Activated CD8-positive, alpha-beta memory T cell treated with anti-CD3 and anti-CD28 coated beads, Interleukin-2, amount 10 ng/mL, durations not matched to agents 7 days and 5 days (primary cell): ENCODE measurements at regions of chr10 and their contacts with region 1.

Region 1: GRCh38 chr10:73886085-73886529 is 11.8 kb upstream of the CAMK2G start:
- DNase-seq: peak; percentile 78
- ATAC-seq: peak; percentile 97
- H3K4me3 Mint-ChIP-seq: no peak overlapping the region
- H3K27ac Mint-ChIP-seq: no peak overlapping the region
- H3K4me1 Mint-ChIP-seq: peaks cover 12% of the 10 kb centered on the region
- H3K27me3 Mint-ChIP-seq: peaks cover 3% of the 10 kb centered on the region

Region 2: DNA sequence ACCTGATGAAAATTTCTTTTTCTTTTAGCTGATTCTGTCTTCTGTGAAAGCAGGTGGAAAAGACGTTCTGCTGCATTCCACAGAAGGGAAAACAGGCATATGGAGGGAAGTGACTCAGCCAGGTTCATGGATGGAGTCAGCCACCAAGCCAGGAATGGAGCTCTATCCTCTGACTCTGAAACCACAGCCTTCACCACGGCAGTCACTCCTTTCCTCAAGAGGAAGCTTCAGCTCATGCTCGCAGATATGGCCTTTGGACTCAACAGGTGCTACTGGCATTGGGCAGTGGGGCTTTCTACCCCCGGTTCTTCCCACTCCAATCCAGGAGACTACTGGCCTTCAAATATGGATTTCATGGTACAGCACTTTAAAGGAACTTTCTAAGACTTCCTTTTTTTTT is 13.3 kb after region 1 on chr10:
- CTCF ChIA-PET with region 1: interaction called, 44 read pairs
- DNase-seq: no peak
- ATAC-seq: no peak
- H3K4me3 Mint-ChIP-seq: no peak overlapping the region
- H3K27ac Mint-ChIP-seq: no peak overlapping the region
- H3K4me1 Mint-ChIP-seq: peaks cover 18% of the 10 kb centered on the region
- H3K27me3 Mint-ChIP-seq: peaks cover 17% of the 10 kb centered on the region

Region 3: GRCh38 chr10:73956476-73957359 is 70.6 kb after region 1 on chr10:
- CTCF ChIA-PET with region 1: interaction called, 24 read pairs
- DNase-seq: peak; percentile 57
- ATAC-seq: peak; percentile 77
- H3K4me3 Mint-ChIP-seq: peak overlapping the region; percentile 31
- H3K27ac Mint-ChIP-seq: peak overlapping the region; percentile 90
- H3K4me1 Mint-ChIP-seq: peaks cover 48% of the 10 kb centered on the region
- H3K27me3 Mint-ChIP-seq: peaks cover 2% of the 10 kb centered on the region

Region 4: GRCh38 chr10:74058658-74059057 is 172.6 kb after region 1 on chr10:
- CTCF ChIA-PET with region 1: interaction called, 14 read pairs
- DNase-seq: peak; percentile 54
- ATAC-seq: no peak
- H3K4me3 Mint-ChIP-seq: no peak overlapping the region
- H3K27ac Mint-ChIP-seq: no peak overlapping the region
- H3K4me1 Mint-ChIP-seq: peaks cover 39% of the 10 kb centered on the region
- H3K27me3 Mint-ChIP-seq: no peaks in the 10 kb centered on the region

Region 5: DNA sequence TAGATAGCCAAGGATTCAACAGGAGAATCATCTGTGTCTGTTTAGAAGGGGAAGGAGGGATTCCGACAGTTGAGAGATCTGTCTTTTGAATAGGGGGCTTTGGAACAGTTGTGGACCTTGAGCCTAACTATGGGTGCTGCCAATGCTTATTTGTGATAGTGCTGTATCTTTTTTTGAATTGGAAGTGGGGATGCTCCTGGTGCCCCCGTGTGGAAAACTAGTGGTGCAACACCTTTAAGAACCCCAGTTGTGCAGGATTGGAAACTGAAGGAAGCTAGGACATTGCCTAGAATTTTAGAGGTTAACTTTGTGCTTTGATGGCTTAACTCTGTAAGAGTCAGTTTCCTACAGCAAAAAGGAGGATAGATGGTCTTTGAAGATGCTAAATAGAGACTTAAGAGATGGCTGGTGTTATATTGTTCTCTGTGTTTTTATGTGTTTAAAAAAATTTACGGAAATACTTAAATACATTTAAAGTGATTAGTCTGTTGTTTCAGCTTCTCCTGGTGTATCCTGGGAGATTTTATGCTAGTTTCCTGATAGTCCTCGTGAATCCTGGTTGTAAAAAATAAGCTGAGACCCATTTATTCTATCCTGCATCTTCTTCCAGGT is 195.2 kb after region 1 on chr10:
- CTCF ChIA-PET with region 1: interaction called, 42 read pairs
- DNase-seq: peak; percentile 58
- ATAC-seq: peak; percentile 34
- H3K4me3 Mint-ChIP-seq: no peak overlapping the region
- H3K27ac Mint-ChIP-seq: no peak overlapping the region
- H3K4me1 Mint-ChIP-seq: peaks cover 53% of the 10 kb centered on the region
- H3K27me3 Mint-ChIP-seq: no peaks in the 10 kb centered on the region

Region 6: GRCh38 chr10:74103560-74104248 is 217.6 kb after region 1 on chr10:
- CTCF ChIA-PET with region 1: interaction called, 23 read pairs
- DNase-seq: no peak
- ATAC-seq: peak; percentile 42
- H3K4me3 Mint-ChIP-seq: no peak overlapping the region
- H3K27ac Mint-ChIP-seq: no peak overlapping the region
- H3K4me1 Mint-ChIP-seq: peaks cover 3% of the 10 kb centered on the region
- H3K27me3 Mint-ChIP-seq: no peaks in the 10 kb centered on the region